WTC11 (cell line): ENCODE measurements at regions of chr3 and their contacts with region 1.

Region 1: GRCh38 chr3:149808209-149808829 is 4.7 kb upstream of the RNF13 start:
- DNase-seq: peak; percentile 57
- ATAC-seq: peak; percentile 6; the same call in 1 of the 2 replicates
- H3K4me3 Mint-ChIP-seq: no peak overlapping the region
- H3K27ac Mint-ChIP-seq: no peak overlapping the region
- H3K4me1 Mint-ChIP-seq: peaks cover 7% of the 10 kb centered on the region
- H3K27me3 Mint-ChIP-seq: peaks cover 4% of the 10 kb centered on the region; the same call in 1 of the 2 replicates
- CTCF ChIP-seq: peak; percentile 56; the same call in 1 of the 2 replicates

Region 2: GRCh38 chr3:149487598-149488197 is 320.6 kb before region 1 on chr3:
- CTCF ChIA-PET with region 1: interaction called, 11 read pairs
- POLR2A ChIA-PET with region 1: no interaction called
- DNase-seq: peak; percentile 81
- ATAC-seq: peak; percentile 86
- H3K4me3 Mint-ChIP-seq: no peak overlapping the region
- H3K27ac Mint-ChIP-seq: no peak overlapping the region
- H3K4me1 Mint-ChIP-seq: no peaks in the 10 kb centered on the region
- H3K27me3 Mint-ChIP-seq: no peaks in the 10 kb centered on the region
- CTCF ChIP-seq: peak; percentile 83

Region 3: DNA sequence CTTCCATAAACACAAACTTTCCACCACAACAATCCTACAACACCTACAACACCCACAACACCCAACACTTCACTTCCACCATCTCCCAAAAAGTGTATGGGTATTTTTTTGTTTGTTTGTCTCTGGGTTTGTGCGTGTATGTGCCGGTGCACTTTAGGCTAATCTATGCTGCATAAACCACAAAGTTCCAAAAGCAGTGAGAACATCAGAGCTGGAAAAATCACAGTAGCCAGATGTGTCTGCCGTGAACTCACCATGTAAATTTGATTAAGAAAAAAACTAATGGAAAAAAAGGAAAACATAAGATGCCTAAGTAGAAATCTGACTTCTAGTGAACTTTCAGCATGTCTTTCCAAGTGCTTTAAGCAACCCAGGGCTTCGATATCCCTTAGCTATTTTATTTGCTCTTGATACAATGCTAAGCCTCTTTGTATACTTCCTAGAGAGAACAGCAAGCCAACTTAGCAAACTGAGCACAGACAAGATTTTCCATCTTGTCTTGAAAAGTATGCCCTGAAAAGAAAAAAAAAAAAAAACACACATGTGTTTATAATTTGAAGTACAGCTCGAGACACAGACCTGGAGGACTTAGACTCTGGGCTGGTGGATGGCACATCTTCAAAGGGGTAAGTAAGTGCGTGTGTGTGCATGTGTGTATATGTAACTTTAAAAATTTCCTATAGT is 241.9 kb before region 1 on chr3:
- CTCF ChIA-PET with region 1: interaction called, 15 read pairs
- POLR2A ChIA-PET with region 1: no interaction called
- DNase-seq: no peak
- ATAC-seq: no peak
- H3K4me3 Mint-ChIP-seq: no peak overlapping the region
- H3K27ac Mint-ChIP-seq: peak overlapping the region; percentile 61
- H3K4me1 Mint-ChIP-seq: peaks cover 31% of the 10 kb centered on the region
- H3K27me3 Mint-ChIP-seq: no peaks in the 10 kb centered on the region
- CTCF ChIP-seq: no peak

Region 4: GRCh38 chr3:149771652-149772271 is 36.6 kb before region 1 on chr3:
- CTCF ChIA-PET with region 1: interaction called, 80 read pairs
- POLR2A ChIA-PET with region 1: no interaction called
- DNase-seq: peak; percentile 74
- ATAC-seq: peak; percentile 87
- H3K4me3 Mint-ChIP-seq: no peak overlapping the region
- H3K27ac Mint-ChIP-seq: no peak overlapping the region
- H3K4me1 Mint-ChIP-seq: peaks cover 12% of the 10 kb centered on the region
- H3K27me3 Mint-ChIP-seq: no peaks in the 10 kb centered on the region
- CTCF ChIP-seq: peak; percentile 76

Region 5: GRCh38 chr3:149826636-149827035 is 18.3 kb after region 1 on chr3:
- CTCF ChIA-PET with region 1: interaction called, 41 read pairs
- POLR2A ChIA-PET with region 1: no interaction called
- DNase-seq: no peak
- ATAC-seq: no peak
- H3K4me3 Mint-ChIP-seq: no peak overlapping the region
- H3K27ac Mint-ChIP-seq: no peak overlapping the region
- H3K4me1 Mint-ChIP-seq: peaks cover 16% of the 10 kb centered on the region
- H3K27me3 Mint-ChIP-seq: no peaks in the 10 kb centered on the region
- CTCF ChIP-seq: no peak

Region 6: GRCh38 chr3:149879872-149880271 is 71.6 kb after region 1 on chr3:
- CTCF ChIA-PET with region 1: interaction called, 15 read pairs
- POLR2A ChIA-PET with region 1: no interaction called
- DNase-seq: peak; percentile 63
- ATAC-seq: peak; percentile 90
- H3K4me3 Mint-ChIP-seq: no peak overlapping the region
- H3K27ac Mint-ChIP-seq: no peak overlapping the region
- H3K4me1 Mint-ChIP-seq: no peaks in the 10 kb centered on the region
- H3K27me3 Mint-ChIP-seq: no peaks in the 10 kb centered on the region
- CTCF ChIP-seq: peak; percentile 47; the same call in 1 of the 2 replicates